IMR-90 (cell line): ENCODE measurements at regions of chr21 and their contacts with region 1.

Region 1: GRCh38 chr21:42039911-42040351 is 29.8 kb upstream of the ZBTB21 start:
- DNase-seq: peak; percentile 96
- ATAC-seq: peak; percentile 80
- H3K4me3 ChIP-seq: no peak overlapping the region
- H3K27ac ChIP-seq: peak overlapping the region; percentile 96
- H3K4me1 ChIP-seq: peaks cover 26% of the 10 kb centered on the region
- H3K27me3 ChIP-seq: no peaks in the 10 kb centered on the region
- CTCF ChIP-seq: no peak
- POLR2A ChIP-seq: peak; percentile 84; the same call in 1 of the 2 replicates
- RAD21 ChIP-seq: peak; percentile 10; the same call in 1 of the 2 replicates

Region 2: GRCh38 chr21:40990366-40990765 is 1049.6 kb before region 1 on chr21:
- CTCF ChIA-PET with region 1: no interaction called
- POLR2A ChIA-PET with region 1: no interaction called
- dilution Hi-C with region 1: no loop called
- in situ Hi-C with region 1: no loop called
- intact Hi-C with region 1: no loop called
- DNase-seq: no peak
- ATAC-seq: no peak
- H3K4me3 ChIP-seq: no peak overlapping the region
- H3K27ac ChIP-seq: no peak overlapping the region
- H3K4me1 ChIP-seq: no peaks in the 10 kb centered on the region
- H3K27me3 ChIP-seq: no peaks in the 10 kb centered on the region
- CTCF ChIP-seq: no peak
- POLR2A ChIP-seq: no peak
- RAD21 ChIP-seq: no peak

Region 3: DNA sequence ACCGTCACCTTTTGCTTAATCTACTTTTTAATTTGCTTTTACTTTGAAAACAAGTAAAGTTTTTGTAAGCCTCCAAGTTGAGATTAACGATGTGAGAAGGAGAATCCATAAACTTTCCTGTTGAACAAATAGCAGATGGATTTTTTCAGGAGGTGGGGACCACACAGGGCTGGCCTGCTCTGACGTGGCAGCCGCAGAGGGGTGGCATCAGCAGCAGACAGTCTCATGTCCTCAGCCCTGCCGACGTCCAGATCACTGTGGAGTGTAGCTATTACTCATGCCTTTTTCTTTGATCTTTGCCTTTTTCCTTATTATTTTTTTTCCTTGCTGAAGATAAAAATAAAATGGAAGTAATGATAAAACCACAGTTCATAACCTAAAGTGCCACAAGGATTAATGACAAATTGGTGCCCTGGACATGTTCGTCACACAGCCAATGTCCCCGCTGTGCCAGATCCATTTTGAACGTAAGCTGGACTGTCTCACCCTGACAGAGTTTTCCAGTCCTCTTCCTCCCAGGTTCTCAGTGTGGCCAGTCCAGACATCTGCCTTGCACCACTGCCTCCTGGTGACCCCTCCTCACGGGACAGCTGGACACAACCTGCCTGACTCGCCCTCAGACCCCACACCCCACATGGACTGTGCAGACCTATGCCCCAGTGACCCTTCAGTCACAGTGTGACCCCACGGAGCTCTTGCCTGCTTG is 14.4 kb before region 1 on chr21:
- CTCF ChIA-PET with region 1: no interaction called
- POLR2A ChIA-PET with region 1: no interaction called
- dilution Hi-C with region 1: no loop called
- in situ Hi-C with region 1: no loop called
- intact Hi-C with region 1: loop called (anchors 2 kb)
- DNase-seq: peak; percentile 94
- ATAC-seq: peak; percentile 95
- H3K4me3 ChIP-seq: no peak overlapping the region
- H3K27ac ChIP-seq: peak overlapping the region; percentile 42
- H3K4me1 ChIP-seq: peaks cover 13% of the 10 kb centered on the region
- H3K27me3 ChIP-seq: no peaks in the 10 kb centered on the region
- CTCF ChIP-seq: no peak
- POLR2A ChIP-seq: no peak
- RAD21 ChIP-seq: no peak

Region 4: DNA sequence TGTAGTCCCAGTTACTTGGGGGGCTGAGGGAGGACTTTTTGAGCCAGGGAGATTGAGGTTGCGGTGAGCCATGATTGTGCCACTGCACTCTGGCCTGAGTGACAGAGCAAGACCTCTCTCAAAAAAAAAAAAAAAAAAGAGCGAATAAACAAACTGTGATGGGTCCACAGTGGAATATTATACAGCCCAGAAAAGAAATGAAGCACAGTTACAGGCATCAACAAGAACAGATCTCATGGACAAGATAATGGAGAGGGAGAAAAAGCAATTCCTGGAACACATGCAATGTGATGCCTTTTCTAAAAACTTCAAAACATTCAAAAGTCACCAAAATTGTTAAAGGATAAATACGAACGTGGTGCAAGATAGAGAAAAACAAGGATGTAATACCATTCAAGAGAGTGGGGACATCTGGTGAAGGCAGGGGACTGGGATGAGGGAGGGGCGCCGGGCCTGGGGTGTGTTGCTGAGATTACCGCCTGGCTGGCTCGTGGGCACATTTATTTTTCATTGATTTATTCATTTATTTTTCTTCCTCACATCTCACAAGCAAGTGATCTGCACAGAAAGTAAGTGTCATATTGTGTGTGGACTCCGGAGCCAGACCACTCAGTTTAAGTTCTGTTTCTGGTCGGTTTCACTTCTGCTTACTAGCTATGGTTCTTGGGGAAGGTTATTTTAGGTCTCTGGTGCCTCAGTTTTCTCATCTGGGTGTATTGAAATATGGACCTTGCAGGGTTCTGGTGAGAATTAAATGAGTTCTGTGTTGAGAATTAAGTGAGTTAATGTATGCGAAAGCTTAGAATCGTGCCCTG is 209.1 kb after region 1 on chr21:
- CTCF ChIA-PET with region 1: no interaction called
- POLR2A ChIA-PET with region 1: no interaction called
- dilution Hi-C with region 1: no loop called
- in situ Hi-C with region 1: no loop called
- intact Hi-C with region 1: no loop called
- DNase-seq: no peak
- ATAC-seq: no peak
- H3K4me3 ChIP-seq: no peak overlapping the region
- H3K27ac ChIP-seq: no peak overlapping the region
- H3K4me1 ChIP-seq: no peaks in the 10 kb centered on the region; the same call in 1 of the 2 replicates
- H3K27me3 ChIP-seq: peaks cover 30% of the 10 kb centered on the region
- CTCF ChIP-seq: no peak
- POLR2A ChIP-seq: no peak
- RAD21 ChIP-seq: no peak